T-cell (primary cell): ENCODE measurements at regions of chr7 and their contacts with region 1.

Region 1: GRCh38 chr7:132544025-132544424 is 32.2 kb downstream of the PLXNA4 start:
- DNase-seq: no peak
- ATAC-seq: no peak
- H3K4me3 ChIP-seq: no peak overlapping the region
- H3K4me3 Mint-ChIP-seq: no peak overlapping the region
- H3K27ac ChIP-seq: no peak overlapping the region
- H3K27ac Mint-ChIP-seq: no peak overlapping the region
- H3K4me1 ChIP-seq: no peaks in the 10 kb centered on the region
- H3K4me1 Mint-ChIP-seq: no peaks in the 10 kb centered on the region
- H3K27me3 ChIP-seq: peaks cover 0 to 4% of the 10 kb centered on the region in 2 experiments
- H3K27me3 Mint-ChIP-seq: no peaks in the 10 kb centered on the region

Region 2: GRCh38 chr7:132100483-132100882 is 443.5 kb before region 1 on chr7:
- CTCF ChIA-PET with region 1: no interaction called
- POLR2A ChIA-PET with region 1: interaction called in 1 of 2 experiments, 12 read pairs
- DNase-seq: no peak
- ATAC-seq: no peak
- H3K4me3 ChIP-seq: no peak overlapping the region
- H3K4me3 Mint-ChIP-seq: no peak overlapping the region
- H3K27ac ChIP-seq: no peak overlapping the region
- H3K27ac Mint-ChIP-seq: no peak overlapping the region
- H3K4me1 ChIP-seq: no peaks in the 10 kb centered on the region
- H3K4me1 Mint-ChIP-seq: no peaks in the 10 kb centered on the region
- H3K27me3 ChIP-seq: peaks cover 0 to 8% of the 10 kb centered on the region in 2 experiments
- H3K27me3 Mint-ChIP-seq: peaks cover 0 to 10% of the 10 kb centered on the region in 2 donors

Region 3: DNA sequence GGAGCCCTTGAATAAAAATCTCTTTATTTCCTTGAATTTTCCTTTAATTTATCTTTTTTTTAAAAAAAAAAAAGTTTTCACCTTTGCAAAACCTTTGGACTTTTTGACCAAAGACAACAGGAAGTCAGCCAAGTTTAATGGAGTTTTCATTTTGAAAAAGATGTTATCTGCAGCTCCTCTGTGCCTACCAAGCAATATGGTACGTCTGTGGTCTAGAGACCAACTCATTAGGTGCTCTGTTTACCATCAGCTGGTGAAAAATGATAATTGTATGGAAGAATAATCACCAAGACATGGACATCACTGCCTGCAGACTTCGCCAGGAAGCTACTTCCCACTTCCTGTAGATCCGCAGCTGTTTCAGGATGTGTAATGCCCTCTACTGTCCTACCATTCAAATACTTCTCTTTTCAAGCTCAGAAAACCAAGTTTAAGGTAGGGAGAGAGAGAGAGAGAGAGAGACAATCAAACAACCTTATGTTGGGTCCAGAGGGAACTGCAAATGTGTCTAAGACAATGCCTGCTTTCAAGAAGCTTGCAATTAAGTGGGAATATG is 13.5 kb after region 1 on chr7:
- CTCF ChIA-PET with region 1: no interaction called
- POLR2A ChIA-PET with region 1: no interaction called
- DNase-seq: no peak
- ATAC-seq: no peak
- H3K4me3 ChIP-seq: no peak overlapping the region
- H3K4me3 Mint-ChIP-seq: no peak overlapping the region
- H3K27ac ChIP-seq: no peak overlapping the region
- H3K27ac Mint-ChIP-seq: no peak overlapping the region
- H3K4me1 ChIP-seq: no peaks in the 10 kb centered on the region
- H3K4me1 Mint-ChIP-seq: peaks cover 0 to 5% (median 4%) of the 10 kb centered on the region in 3 donors
- H3K27me3 ChIP-seq: peaks cover 0 to 9% of the 10 kb centered on the region in 2 experiments
- H3K27me3 Mint-ChIP-seq: no peaks in the 10 kb centered on the region